Naive thymus-derived CD4-positive, alpha-beta T cell (primary cell): ENCODE measurements at regions of chr14 and their contacts with region 1.

Region 1: GRCh38 chr14:96538097-96538989 is 36.2 kb downstream of the PAPOLA start:
- DNase-seq: no peak
- ATAC-seq: no peak
- H3K4me3 ChIP-seq: no peak overlapping the region
- H3K4me3 Mint-ChIP-seq: no peak overlapping the region
- H3K27ac ChIP-seq: no peak overlapping the region
- H3K27ac Mint-ChIP-seq: peak overlapping the region in 4 of 9 donors; percentile 27 to 59 (median 40)
- H3K4me1 ChIP-seq: no peaks in the 10 kb centered on the region
- H3K4me1 Mint-ChIP-seq: peaks cover 0 to 17% (median 0%) of the 10 kb centered on the region in 7 donors
- H3K27me3 ChIP-seq: no peaks in the 10 kb centered on the region
- H3K27me3 Mint-ChIP-seq: no peaks in the 10 kb centered on the region

Region 2: DNA sequence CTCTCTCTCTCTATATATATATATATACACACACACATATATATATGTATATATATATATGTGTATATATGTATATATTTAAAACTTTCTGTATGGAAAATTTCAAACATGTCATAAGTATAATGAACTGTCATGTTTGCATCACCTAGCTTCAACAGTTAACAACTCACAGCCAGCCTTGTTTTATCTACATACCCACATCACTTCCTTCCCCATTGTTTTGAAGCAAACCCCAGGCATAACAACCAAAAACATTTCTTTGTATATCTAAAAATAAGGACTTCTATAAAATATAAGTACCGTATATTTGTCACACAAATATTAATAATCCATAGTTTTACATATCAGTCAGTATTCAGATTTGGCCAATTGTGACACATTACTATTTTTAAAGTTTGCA is 21.2 kb after region 1 on chr14:
- CTCF ChIA-PET with region 1: no interaction called
- POLR2A ChIA-PET with region 1: interaction called, 4 read pairs
- intact Hi-C with region 1: loop called in 1 of 2 experiments (anchors 2 kb)
- DNase-seq: no peak
- ATAC-seq: peak; percentile 32
- H3K4me3 ChIP-seq: no peak overlapping the region
- H3K4me3 Mint-ChIP-seq: no peak overlapping the region
- H3K27ac ChIP-seq: no peak overlapping the region
- H3K27ac Mint-ChIP-seq: peak overlapping the region in 2 of 9 donors; percentile 10 to 31
- H3K4me1 ChIP-seq: no peaks in the 10 kb centered on the region
- H3K4me1 Mint-ChIP-seq: peaks cover under 1 to 16% (median 8%) of the 10 kb centered on the region in 7 donors
- H3K27me3 ChIP-seq: no peaks in the 10 kb centered on the region
- H3K27me3 Mint-ChIP-seq: no peaks in the 10 kb centered on the region